Activated CD8-positive, alpha-beta T cell treated with anti-CD3 and anti-CD28 coated beads, Interleukin-2, amount 10 ng/mL, durations not matched to agents 7 days and 5 days (primary cell): ENCODE measurements at regions of chr12 and their contacts with region 1.

Region 1: DNA sequence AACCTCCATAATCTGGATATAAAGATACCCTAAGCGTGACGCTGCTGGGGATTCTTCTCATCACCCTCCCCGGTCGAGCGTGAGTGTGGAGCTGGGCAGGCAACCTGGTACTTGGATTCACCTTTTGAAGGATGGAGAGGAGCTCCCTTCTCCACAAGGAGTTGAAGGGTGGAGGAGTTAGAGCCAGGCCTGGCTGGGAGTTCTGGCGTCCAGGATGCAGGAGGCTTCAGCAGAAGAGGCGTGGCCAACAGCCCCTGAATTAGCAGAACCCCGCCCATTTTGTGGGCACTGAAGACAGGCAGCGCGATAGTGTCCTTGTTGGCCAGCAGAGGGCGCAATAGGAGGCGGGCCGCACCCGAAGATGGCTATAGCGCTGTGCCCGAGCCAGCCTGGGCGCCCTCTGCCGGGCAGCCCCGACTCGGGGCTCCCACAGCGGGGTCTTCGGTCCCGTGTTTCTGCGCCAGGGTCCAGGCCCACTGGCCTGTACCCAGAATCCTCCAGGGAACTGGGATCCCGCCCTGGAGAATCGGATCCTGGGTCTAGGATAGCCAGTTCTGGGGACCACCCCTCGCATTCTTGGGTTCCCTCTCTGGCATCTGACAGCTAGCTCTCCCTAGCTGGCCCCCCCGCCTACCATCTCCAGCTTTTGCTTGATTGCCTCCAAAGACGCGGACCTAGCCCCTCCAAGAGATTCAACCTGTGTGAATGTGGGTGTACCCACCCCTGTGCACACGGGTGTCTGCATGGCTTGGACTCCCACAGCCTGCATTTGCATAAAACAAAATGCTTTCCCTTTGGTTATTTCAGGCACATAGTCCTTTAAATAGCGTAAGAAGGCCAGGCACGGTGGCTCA is 26.0 kb upstream of the SMUG1 start:
- DNase-seq: peak; percentile 96
- ATAC-seq: peak; percentile 87
- H3K4me3 Mint-ChIP-seq: peak overlapping the region; percentile 69
- H3K27ac Mint-ChIP-seq: peak overlapping the region; percentile 21
- H3K4me1 Mint-ChIP-seq: peaks cover 43% of the 10 kb centered on the region
- H3K27me3 Mint-ChIP-seq: peaks cover 39% of the 10 kb centered on the region

Region 2: GRCh38 chr12:54191550-54192022 is 23.2 kb before region 1 on chr12:
- CTCF ChIA-PET with region 1: interaction called, 35 read pairs
- POLR2A ChIA-PET with region 1: no interaction called
- DNase-seq: peak; percentile 85
- ATAC-seq: peak; percentile 66
- H3K4me3 Mint-ChIP-seq: no peak overlapping the region
- H3K27ac Mint-ChIP-seq: no peak overlapping the region
- H3K4me1 Mint-ChIP-seq: peaks cover 24% of the 10 kb centered on the region
- H3K27me3 Mint-ChIP-seq: peaks cover 50% of the 10 kb centered on the region

Region 3: DNA sequence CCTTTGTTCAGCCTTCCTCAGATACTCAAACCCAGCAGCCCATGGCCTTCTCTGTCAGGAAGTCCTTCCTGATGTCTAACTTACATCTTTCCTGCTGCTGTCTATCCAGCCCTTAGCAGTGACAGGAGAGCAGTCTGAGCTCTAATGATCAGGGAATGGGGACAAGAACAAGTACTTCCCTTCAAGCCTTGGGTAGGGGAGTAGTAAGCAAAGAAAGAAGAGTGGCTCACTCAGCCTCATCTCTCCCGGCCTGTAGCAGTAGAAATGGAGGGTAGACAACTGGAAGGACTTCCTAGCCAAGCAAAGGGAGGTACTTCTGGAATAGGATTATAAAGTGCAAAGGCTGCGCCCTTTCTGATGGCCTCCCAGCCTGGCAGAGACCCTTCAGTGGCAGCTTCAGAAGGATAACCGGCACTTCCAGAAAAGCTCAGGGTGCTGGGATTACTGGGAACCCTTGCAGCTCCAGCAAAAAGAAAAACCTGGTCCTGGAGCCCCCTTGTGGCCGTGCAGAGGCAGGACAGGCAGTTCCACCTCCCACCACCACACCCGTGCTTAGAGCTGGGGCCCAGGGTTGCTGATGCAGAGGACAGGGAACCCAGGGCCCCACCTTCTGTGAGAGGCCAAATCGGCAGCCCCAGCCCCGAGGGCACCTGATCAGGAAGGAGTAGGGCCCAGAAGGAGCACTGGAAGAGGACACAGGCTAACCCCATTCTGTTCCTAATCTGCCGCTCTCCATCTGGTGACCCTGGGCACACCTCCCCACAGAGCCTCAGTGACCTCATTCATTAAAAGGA is 13.6 kb before region 1 on chr12:
- CTCF ChIA-PET with region 1: interaction called, 38 read pairs
- POLR2A ChIA-PET with region 1: no interaction called
- DNase-seq: peak; percentile 74
- ATAC-seq: peak; percentile 94
- H3K4me3 Mint-ChIP-seq: no peak overlapping the region
- H3K27ac Mint-ChIP-seq: no peak overlapping the region
- H3K4me1 Mint-ChIP-seq: peaks cover 3% of the 10 kb centered on the region
- H3K27me3 Mint-ChIP-seq: peaks cover 44% of the 10 kb centered on the region

Region 4: GRCh38 chr12:54232790-54233189 is 18.0 kb after region 1 on chr12:
- CTCF ChIA-PET with region 1: interaction called, 13 read pairs
- POLR2A ChIA-PET with region 1: no interaction called
- DNase-seq: no peak
- ATAC-seq: no peak
- H3K4me3 Mint-ChIP-seq: no peak overlapping the region
- H3K27ac Mint-ChIP-seq: no peak overlapping the region
- H3K4me1 Mint-ChIP-seq: peaks cover 25% of the 10 kb centered on the region
- H3K27me3 Mint-ChIP-seq: no peaks in the 10 kb centered on the region

Region 5: GRCh38 chr12:54359033-54359761 is 144.4 kb after region 1 on chr12:
- CTCF ChIA-PET with region 1: interaction called, 17 read pairs
- POLR2A ChIA-PET with region 1: no interaction called
- DNase-seq: peak; percentile 98
- ATAC-seq: peak; percentile 96
- H3K4me3 Mint-ChIP-seq: no peak overlapping the region
- H3K27ac Mint-ChIP-seq: no peak overlapping the region
- H3K4me1 Mint-ChIP-seq: peaks cover 30% of the 10 kb centered on the region
- H3K27me3 Mint-ChIP-seq: no peaks in the 10 kb centered on the region

Region 6: DNA sequence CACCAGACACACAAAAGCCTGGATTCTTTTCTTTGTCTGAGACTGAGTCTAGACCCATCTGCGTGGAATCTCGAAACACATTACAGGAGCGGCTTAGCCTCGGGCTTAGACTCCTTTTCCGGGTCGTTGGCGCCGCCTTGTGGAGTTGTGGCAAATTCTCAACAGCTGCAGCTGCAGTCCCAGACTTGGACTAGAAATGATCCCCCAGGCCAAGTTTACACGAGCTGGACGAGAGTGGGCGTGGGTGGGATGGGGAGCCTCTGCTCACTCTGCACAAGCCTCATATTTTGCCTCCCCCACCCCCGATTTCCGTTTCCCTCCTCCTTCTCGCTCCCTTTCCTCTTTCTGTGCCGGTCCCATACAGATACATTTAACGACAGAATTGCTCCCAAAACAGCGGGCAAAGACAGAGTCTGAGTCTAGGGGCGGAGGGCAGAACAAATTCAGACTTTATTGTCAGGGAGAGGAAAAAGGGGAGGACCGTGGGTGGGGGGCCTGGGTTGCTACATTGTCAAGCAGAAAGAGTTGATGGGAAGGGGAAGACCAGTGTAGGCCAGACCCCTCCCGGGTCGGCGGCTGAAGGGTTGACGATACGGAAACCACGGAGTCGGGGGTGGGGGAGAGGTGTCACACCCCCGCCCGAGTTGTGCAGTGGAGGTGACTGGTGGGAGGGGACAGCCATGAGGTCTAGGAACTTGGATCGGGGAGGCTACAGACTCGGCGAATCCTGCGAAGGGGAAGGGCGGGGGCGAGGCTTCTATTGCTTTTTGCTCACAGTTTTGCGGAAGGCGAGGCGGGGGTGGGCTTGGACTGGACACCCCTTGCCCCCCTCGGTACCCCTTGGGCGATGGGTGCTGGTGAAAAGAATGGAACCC is 154.2 kb after region 1 on chr12:
- CTCF ChIA-PET with region 1: interaction called, 12 read pairs
- POLR2A ChIA-PET with region 1: no interaction called
- DNase-seq: peak; percentile 93
- ATAC-seq: peak; percentile 89
- H3K4me3 Mint-ChIP-seq: no peak overlapping the region
- H3K27ac Mint-ChIP-seq: peak overlapping the region; percentile 32
- H3K4me1 Mint-ChIP-seq: peaks cover 52% of the 10 kb centered on the region
- H3K27me3 Mint-ChIP-seq: peaks cover 4% of the 10 kb centered on the region